ENCODE measurements at regions of chr19 and their contacts with region 1.

Region 1: GRCh38 chr19:49580264-49581006 is at the start of gene NOSIP:
- DNase-seq: peak; percentile 87 to 98 (median 90)
- ATAC-seq: peak; percentile 97
- H3K4me3 ChIP-seq: peak within 1 kb of the TSS; percentile 78
- H3K27ac ChIP-seq: peak within 1 kb of the TSS; percentile 81
- H3K4me1 ChIP-seq: peaks cover 10 to 13% of the 10 kb centered on the region in 2 experiments; a peak in 4 of 5 replicates
- H3K27me3 ChIP-seq: no peaks in the 10 kb centered on the region
- CTCF ChIP-seq: 0 out of 6 replicates have a peak, but pooled peaks of 1 of the 3 experiments have one; percentile 13
- EP300 ChIP-seq: peak; percentile 52
- POLR2A ChIP-seq: peak; percentile 99
- RAD21 ChIP-seq: no peak
- polyA plus RNA-seq, gene NOSIP: 14.4 to 42.1 TPM

Region 2: DNA sequence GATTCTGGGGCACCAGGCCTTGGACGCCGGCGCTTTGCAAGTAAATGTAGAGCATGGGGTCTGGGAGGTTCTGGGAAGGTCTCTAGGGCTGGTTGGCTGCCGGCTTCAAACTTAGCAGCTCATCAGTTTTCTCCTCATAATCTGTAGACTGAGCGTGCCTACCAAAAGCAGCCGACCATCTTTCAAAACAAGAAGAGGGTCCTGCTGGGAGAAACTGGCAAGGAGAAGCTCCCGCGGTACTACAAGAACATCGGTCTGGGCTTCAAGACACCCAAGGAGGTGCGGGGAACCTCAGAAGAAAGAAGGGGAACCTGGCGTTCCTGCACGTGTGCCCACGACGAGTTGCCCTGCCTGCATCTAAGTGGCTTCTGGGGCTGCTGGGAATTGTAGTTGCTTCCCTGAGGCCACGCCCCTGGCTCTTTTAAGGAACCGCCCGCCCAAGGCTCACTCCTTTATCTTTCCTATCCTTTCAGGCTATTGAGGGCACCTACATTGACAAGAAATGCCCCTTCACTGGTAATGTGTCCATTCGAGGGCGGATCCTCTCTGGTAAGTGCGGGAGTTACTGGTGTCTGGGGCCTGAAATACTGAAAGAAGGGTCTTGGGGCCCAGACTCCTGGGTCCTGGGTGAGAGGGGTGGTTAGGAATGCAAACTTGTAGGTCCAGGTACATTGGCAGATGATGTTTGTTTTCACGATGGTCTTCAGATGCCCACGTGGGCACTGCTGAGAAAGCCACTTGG is 83.2 kb before region 1 on chr19:
- CTCF ChIA-PET with region 1: no interaction called
- POLR2A ChIA-PET with region 1: interaction called, 11 read pairs
- in situ Hi-C with region 1: no loop called
- intact Hi-C with region 1: no loop called
- DNase-seq: peak; percentile 47 to 89 (median 63)
- ATAC-seq: peak; percentile 37
- H3K4me3 ChIP-seq: peak overlapping the region; percentile 89
- H3K27ac ChIP-seq: peak overlapping the region; percentile 94
- H3K4me1 ChIP-seq: peaks cover 33 to 44% of the 10 kb centered on the region in 2 experiments; a peak in 4 of 5 replicates
- H3K27me3 ChIP-seq: no peaks in the 10 kb centered on the region
- CTCF ChIP-seq: no peak
- EP300 ChIP-seq: no peak
- POLR2A ChIP-seq: peak; percentile 68
- RAD21 ChIP-seq: no peak

Region 3: DNA sequence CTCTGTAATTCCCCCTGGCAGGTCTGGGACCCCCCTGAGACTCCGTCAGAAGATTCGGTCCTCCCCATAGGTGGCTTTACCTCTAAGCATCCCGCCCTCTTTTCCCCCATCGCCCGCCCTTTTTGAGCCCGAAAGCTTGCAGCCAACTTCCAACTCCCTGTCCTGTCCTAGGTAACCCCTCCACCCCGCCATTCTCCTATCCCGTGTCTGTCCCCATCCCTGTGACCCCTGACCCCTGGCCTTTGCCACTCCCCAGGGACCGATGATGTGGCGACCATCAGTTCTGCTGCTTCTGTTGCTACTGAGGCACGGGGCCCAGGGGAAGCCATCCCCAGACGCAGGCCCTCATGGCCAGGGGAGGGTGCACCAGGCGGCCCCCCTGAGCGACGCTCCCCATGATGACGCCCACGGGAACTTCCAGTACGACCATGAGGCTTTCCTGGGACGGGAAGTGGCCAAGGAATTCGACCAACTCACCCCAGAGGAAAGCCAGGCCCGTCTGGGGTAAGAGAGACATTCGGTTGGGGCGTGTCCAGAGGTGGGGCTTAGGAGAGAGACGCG is 52.1 kb before region 1 on chr19:
- CTCF ChIA-PET with region 1: no interaction called
- POLR2A ChIA-PET with region 1: interaction called, 14 read pairs
- in situ Hi-C with region 1: no loop called
- intact Hi-C with region 1: no loop called
- DNase-seq: peak in 2 of 4 experiments; percentile 8 to 10
- ATAC-seq: no peak
- H3K4me3 ChIP-seq: peak overlapping the region; percentile 44
- H3K27ac ChIP-seq: no peak overlapping the region
- H3K4me1 ChIP-seq: peaks cover 10 to 40% of the 10 kb centered on the region in 2 experiments; a peak in 4 of 5 replicates
- H3K27me3 ChIP-seq: no peaks in the 10 kb centered on the region
- CTCF ChIP-seq: no peak
- EP300 ChIP-seq: no peak
- POLR2A ChIP-seq: no peak
- RAD21 ChIP-seq: no peak

Region 4: GRCh38 chr19:49570138-49570856 is 10.1 kb before region 1 on chr19:
- CTCF ChIA-PET with region 1: no interaction called
- POLR2A ChIA-PET with region 1: interaction called, 23 read pairs
- in situ Hi-C with region 1: no loop called
- intact Hi-C with region 1: no loop called
- DNase-seq: peak; percentile 81 to 93 (median 82)
- ATAC-seq: peak; percentile 89
- H3K4me3 ChIP-seq: no peak overlapping the region
- H3K27ac ChIP-seq: peak overlapping the region; percentile 53
- H3K4me1 ChIP-seq: peaks cover 17 to 21% of the 10 kb centered on the region in 2 experiments
- H3K27me3 ChIP-seq: no peaks in the 10 kb centered on the region
- CTCF ChIP-seq: peak; percentile 98 to 100 (median 99)
- EP300 ChIP-seq: no peak
- POLR2A ChIP-seq: no peak
- RAD21 ChIP-seq: peak; percentile 89 to 90